ENCODE measurements at regions of chr20 and their contacts with region 1.

Region 1: DNA sequence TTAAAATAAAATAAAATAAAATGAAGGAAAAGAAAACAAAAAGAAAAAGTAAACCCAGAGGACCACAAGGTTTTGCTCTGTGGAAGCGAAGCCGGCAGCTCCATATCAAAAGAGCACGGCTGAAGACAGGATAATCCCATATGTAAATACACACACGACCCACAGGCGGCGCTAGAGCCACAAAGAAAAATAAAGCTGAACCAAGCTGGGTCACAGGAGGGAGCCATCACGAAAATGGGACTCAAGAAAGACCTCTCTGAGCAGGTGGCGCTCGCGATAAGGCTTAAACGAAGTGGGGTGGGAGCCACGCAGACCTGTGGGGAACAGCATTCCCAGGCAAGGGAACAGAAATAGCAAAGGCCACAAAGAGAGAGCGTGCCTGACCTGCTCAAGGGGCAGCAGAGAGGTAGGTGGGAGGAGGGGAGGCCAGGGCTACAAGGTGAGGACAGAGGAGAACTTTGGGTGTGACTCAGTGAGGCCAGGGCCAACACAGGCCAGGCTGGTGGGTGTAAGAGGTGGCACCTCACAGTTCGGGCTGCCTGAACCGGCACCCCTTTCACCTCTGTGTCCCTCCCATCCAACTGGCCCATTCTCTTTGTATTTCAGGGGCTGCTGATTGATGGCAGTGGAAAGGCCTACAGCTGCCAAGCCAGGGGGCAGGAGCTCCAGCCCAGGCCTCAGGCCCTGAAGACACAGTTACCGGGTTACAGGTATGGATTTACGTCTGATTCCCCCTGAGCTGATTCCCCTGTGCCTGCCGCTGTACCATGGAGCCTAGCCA is 26.0 kb downstream of the PTGIS start:
- DNase-seq: peak; percentile 83
- H3K4me3 Mint-ChIP-seq: no peak overlapping the region
- H3K27ac Mint-ChIP-seq: no peak overlapping the region
- H3K4me1 Mint-ChIP-seq: peaks cover 25% of the 10 kb centered on the region
- H3K27me3 Mint-ChIP-seq: peaks cover 15% of the 10 kb centered on the region
- CTCF ChIP-seq: peak; percentile 98

Region 2: GRCh38 chr20:49559401-49560081 is 17.6 kb after region 1 on chr20:
- CTCF ChIA-PET with region 1: interaction called, 21 read pairs
- intact Hi-C with region 1: no loop called
- DNase-seq: no peak
- H3K4me3 Mint-ChIP-seq: no peak overlapping the region
- H3K27ac Mint-ChIP-seq: no peak overlapping the region
- H3K4me1 Mint-ChIP-seq: peaks cover 31% of the 10 kb centered on the region
- H3K27me3 Mint-ChIP-seq: no peaks in the 10 kb centered on the region
- CTCF ChIP-seq: no peak

Region 3: DNA sequence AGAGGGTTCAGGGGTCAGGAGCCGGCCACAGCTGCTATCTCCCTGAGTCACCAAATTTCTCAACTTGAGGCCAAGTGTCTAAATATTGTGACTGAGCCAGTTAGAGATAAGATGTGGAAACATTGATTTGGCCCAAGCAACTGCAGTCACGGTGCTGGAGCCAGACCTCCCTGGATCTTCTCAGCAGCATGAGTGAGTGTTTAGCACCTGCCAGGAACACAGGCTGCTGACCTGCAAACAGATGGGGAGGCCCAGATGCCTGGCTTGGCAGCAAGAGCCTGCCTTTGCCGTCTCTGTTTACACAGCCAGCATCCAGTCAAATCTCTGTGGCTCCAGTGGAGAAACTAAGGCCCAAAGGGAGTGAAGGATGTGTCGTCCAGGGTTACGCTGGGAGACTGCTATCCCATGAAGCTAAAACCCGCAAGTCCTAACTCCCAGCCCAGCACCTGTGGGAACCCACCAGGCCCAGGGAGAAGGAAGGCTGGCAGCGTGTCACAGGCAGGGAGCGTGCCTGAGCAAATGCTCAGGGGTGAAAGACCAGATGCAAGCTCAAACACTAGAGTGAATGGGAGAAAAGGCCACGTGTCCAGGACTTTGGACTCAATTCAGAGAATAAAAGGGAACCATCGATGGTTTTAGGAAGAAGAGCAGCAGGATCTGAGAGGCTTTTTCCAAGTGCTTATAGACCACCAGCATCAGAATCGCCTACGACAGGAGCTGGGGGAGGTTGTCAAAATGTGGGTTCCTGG is 41.9 kb after region 1 on chr20:
- CTCF ChIA-PET with region 1: interaction called, 19 read pairs
- intact Hi-C with region 1: no loop called
- DNase-seq: peak; percentile 87
- H3K4me3 Mint-ChIP-seq: peak overlapping the region; percentile 49
- H3K27ac Mint-ChIP-seq: peak overlapping the region; percentile 92
- H3K4me1 Mint-ChIP-seq: peaks cover 62% of the 10 kb centered on the region
- H3K27me3 Mint-ChIP-seq: no peaks in the 10 kb centered on the region
- CTCF ChIP-seq: no peak

Region 4: GRCh38 chr20:49603209-49603627 is 61.3 kb after region 1 on chr20:
- CTCF ChIA-PET with region 1: interaction called, 184 read pairs
- intact Hi-C with region 1: loop called (anchors 1 kb)
- DNase-seq: peak; percentile 41
- H3K4me3 Mint-ChIP-seq: no peak overlapping the region
- H3K27ac Mint-ChIP-seq: no peak overlapping the region
- H3K4me1 Mint-ChIP-seq: peaks cover 18% of the 10 kb centered on the region
- H3K27me3 Mint-ChIP-seq: peaks cover 4% of the 10 kb centered on the region
- CTCF ChIP-seq: peak; percentile 42

Region 5: GRCh38 chr20:49846206-49846807 is 304.4 kb after region 1 on chr20:
- CTCF ChIA-PET with region 1: interaction called, 7 read pairs
- intact Hi-C with region 1: loop called (anchors 1 kb)
- DNase-seq: peak; percentile 82
- H3K4me3 Mint-ChIP-seq: no peak overlapping the region
- H3K27ac Mint-ChIP-seq: no peak overlapping the region
- H3K4me1 Mint-ChIP-seq: no peaks in the 10 kb centered on the region
- H3K27me3 Mint-ChIP-seq: no peaks in the 10 kb centered on the region
- CTCF ChIP-seq: peak; percentile 79

Region 6: DNA sequence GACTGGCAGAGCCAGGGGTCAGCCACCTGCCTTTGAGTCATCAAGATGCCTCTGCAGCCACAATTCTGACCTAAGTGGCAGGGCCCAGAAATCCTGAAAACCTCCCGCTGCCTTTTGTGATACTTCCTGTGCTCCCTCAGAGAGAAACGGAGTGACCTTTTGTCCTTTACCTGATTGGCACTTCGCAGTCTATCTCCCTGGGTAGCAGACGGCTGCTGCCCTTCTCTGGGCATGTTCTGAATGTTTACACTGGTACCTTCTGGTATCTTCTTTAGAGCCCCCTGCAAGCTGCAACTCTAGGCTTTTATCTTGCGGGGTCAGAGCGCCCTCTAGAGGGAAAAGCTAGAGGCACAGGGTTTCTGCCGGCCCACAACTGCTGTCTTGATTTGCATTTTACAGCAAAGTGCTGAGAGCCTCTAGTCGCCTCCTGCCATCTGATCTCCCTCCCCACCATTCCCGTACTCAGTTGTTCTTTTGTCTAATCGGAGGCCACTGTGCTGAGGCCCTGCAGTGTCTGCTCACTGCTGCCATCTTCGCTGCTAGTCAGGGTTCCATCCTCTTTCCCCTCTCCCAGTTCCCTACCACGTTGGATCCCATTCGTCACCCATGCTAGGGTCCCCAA is 346.5 kb after region 1 on chr20:
- CTCF ChIA-PET with region 1: interaction called, 5 read pairs
- intact Hi-C with region 1: loop called (anchors 1 kb)
- DNase-seq: peak; percentile 72
- H3K4me3 Mint-ChIP-seq: no peak overlapping the region
- H3K27ac Mint-ChIP-seq: peak overlapping the region; percentile 46
- H3K4me1 Mint-ChIP-seq: peaks cover 34% of the 10 kb centered on the region
- H3K27me3 Mint-ChIP-seq: no peaks in the 10 kb centered on the region
- CTCF ChIP-seq: peak; percentile 93

Region 7: GRCh38 chr20:49928401-49929141 is 386.6 kb after region 1 on chr20:
- CTCF ChIA-PET with region 1: no interaction called
- intact Hi-C with region 1: loop called (anchors 5 kb)
- DNase-seq: peak; percentile 93
- H3K4me3 Mint-ChIP-seq: no peak overlapping the region
- H3K27ac Mint-ChIP-seq: peak overlapping the region; percentile 42
- H3K4me1 Mint-ChIP-seq: peaks cover 3% of the 10 kb centered on the region
- H3K27me3 Mint-ChIP-seq: no peaks in the 10 kb centered on the region
- CTCF ChIP-seq: peak; percentile 91

Region 8: GRCh38 chr20:50070991-50071888 is 529.3 kb after region 1 on chr20:
- CTCF ChIA-PET with region 1: no interaction called
- intact Hi-C with region 1: no loop called
- DNase-seq: peak; percentile 99
- H3K4me3 Mint-ChIP-seq: peak overlapping the region; percentile 70
- H3K27ac Mint-ChIP-seq: no peak overlapping the region
- H3K4me1 Mint-ChIP-seq: peaks cover 9% of the 10 kb centered on the region
- H3K27me3 Mint-ChIP-seq: peaks cover 28% of the 10 kb centered on the region
- CTCF ChIP-seq: peak; percentile 100